Left lung (tissue), 14 donors: ENCODE measurements at regions of chr2 and their contacts with region 1.

Region 1: GRCh38 chr2:152635635-152636298 is 81.5 kb downstream of the PRPF40A start:
- DNase-seq: peak in 3 of 4 donors; percentile 39 to 59 (median 56)
- ATAC-seq: peak; percentile 88
- H3K4me3 ChIP-seq: no peak overlapping the region
- H3K27ac ChIP-seq: no peak overlapping the region
- H3K4me1 ChIP-seq: peaks cover 0 to 11% of the 10 kb centered on the region in 2 donors
- H3K27me3 ChIP-seq: no peaks in the 10 kb centered on the region
- CTCF ChIP-seq: peak; percentile 76 to 82

Region 2: DNA sequence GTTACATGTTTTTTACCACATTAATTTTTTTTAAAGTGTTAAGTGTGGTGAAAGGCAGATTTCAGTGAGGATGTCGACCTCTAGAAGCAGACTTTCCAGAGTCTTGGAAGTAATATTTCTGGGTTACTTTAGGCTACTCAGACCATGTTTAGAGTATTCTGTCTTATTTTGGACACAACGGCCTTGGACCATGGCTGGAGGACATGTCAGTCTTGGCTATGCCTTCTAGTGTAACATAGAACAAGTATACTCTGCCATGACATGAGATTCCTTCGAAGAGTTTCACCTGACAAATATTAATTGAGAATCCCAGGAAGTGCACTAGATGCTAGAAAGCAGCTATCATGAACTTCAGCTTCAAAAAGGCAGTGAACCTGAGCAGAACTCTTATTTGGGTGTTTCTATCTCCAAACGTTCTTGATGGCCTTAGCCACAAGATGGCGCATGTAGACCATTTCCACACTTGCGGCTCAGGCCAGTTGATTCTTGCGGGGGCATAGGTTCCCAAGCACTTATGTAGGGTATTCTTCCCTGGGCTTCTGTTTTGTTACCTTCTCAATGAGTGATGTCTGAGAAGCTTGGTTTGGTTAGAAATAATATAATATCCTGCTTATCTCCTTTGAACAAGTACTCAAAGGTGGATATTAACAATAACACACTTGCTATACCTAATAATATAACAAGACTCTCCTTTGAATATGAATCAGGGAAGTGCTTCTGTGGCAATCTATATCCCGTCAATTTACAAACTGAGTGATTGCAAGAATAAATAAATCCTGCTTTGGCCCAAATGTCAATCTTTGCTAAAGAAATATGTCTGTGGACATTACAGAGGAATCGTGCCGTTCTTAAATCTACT is 598.9 kb before region 1 on chr2:
- intact Hi-C with region 1: loop called in 1 of 2 experiments (anchors 10 kb)
- DNase-seq: peak in 3 of 4 donors; percentile 61 to 84 (median 69)
- ATAC-seq: peak; percentile 90
- H3K4me3 ChIP-seq: no peak overlapping the region
- H3K27ac ChIP-seq: no peak overlapping the region
- H3K4me1 ChIP-seq: peaks cover 2 to 23% of the 10 kb centered on the region in 2 donors
- H3K27me3 ChIP-seq: no peaks in the 10 kb centered on the region
- CTCF ChIP-seq: peak; percentile 71 to 77

Region 3: DNA sequence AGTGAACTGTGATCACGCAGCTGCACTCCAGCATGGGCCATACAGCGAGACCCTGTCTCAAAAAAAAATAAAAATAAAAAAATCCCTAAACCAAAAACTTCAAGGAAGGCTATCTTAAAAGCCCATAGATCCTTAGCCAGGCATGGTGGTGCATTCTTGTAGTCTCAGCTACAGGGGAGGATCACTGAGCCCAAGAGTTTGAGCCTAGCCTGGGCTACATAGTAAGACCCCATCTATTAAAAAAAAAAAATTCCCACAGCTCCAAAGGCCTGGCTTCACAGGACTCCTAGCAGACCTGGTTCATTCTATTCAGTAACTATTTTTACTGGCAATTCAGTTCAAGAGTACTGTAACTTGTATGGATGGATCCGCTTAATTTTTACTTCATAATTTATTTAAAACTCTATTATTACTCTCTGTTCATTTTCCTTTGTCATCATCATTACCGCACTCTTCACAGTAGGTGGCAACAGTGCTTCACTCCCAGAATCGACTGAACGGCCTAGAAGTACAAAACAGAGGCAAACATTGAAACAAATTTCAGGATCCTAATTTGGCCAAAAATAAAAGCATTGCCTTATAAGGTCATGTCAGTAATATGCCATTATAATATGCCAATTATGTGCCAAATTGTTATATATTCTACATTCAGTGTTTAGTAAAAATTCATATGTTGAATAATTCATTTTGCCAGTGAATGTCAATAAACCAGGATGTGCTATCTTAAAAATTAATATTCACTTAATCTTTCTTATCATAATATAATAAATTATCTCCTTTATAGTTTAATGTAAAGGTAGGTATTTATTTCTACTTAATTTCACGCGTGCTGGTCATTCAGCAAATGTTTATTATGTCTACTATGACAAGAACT is 445.9 kb before region 1 on chr2:
- intact Hi-C with region 1: loop called in 1 of 2 experiments (anchors 5 kb)
- DNase-seq: peak in 1 of 4 donors; percentile 73
- ATAC-seq: peak; percentile 96
- H3K4me3 ChIP-seq: no peak overlapping the region
- H3K27ac ChIP-seq: no peak overlapping the region
- H3K4me1 ChIP-seq: no peaks in the 10 kb centered on the region
- H3K27me3 ChIP-seq: no peaks in the 10 kb centered on the region
- CTCF ChIP-seq: peak; percentile 66 to 89